B cell (primary cell): ENCODE measurements at regions of chr9 and their contacts with region 1.

Region 1: GRCh38 chr9:105244003-105244733 is at the start of gene SLC44A1:
- DNase-seq: peak; percentile 92
- ATAC-seq: peak; percentile 84
- H3K4me3 ChIP-seq: peak within 1 kb of the TSS; percentile 38 to 85 (median 71)
- H3K4me3 Mint-ChIP-seq: peak within 1 kb of the TSS; percentile 95
- H3K27ac ChIP-seq: peak within 1 kb of the TSS; percentile 42 to 73
- H3K27ac Mint-ChIP-seq: peak within 1 kb of the TSS; percentile 89
- H3K4me1 ChIP-seq: peaks cover 11 to 15% of the 10 kb centered on the region in 2 donors
- H3K4me1 Mint-ChIP-seq: peaks cover 28% of the 10 kb centered on the region
- H3K27me3 ChIP-seq: no peaks in the 10 kb centered on the region
- H3K27me3 Mint-ChIP-seq: peaks cover 8% of the 10 kb centered on the region
- CTCF ChIP-seq: no peak
- total RNA-seq, gene SLC44A1: 16.2 and 17.7 TPM in 2 replicates

Region 2: DNA sequence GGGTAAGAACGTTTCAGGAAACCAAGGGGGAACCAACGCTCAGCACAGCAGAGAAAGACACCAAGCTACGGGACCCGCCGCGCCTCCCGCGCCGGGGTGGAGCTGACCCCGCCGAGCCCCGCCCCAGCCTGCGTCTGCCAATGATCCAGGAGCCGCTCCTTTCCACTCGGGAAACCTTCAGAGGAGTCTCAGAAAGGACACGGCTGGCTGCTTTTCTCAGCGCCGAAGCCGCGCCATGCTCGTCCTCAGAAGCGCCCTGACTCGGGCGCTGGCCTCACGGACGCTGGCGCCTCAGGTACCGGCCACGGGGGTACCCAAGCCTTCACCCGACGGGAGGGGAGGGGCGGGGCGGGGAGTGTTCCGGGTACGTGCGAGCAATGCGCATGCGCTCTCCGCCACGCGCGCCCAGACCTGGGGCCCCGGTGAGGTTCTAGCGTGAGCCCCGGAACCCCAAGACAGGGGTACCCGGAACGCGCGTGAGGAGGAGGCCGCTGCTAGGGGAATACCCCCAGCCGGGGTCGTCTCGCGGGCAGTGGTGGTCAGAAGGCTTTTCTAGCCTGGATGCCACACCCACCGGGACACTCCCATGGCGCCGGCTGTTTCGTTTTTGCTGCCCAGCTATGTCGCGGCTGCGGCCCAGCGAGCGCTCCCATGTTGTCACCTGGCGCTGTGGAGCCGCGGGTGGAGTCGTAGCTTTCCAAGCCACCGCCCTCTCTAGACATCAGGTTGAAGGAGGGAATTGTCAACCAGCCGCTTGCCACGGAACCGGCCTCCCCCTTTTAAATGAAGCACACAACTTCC is 496.4 kb before region 1 on chr9 and contains the start of gene NIPSNAP3A:
- CTCF ChIA-PET with region 1: no interaction called
- POLR2A ChIA-PET with region 1: interaction called, 7 read pairs
- intact Hi-C with region 1: loop called (anchors 5 kb)
- DNase-seq: peak; percentile 95
- ATAC-seq: peak; percentile 85
- H3K4me3 ChIP-seq: peak within 1 kb of the TSS; percentile 76 to 91 (median 84)
- H3K4me3 Mint-ChIP-seq: peak within 1 kb of the TSS; percentile 95
- H3K27ac ChIP-seq: peak within 1 kb of the TSS; percentile 88 to 90
- H3K27ac Mint-ChIP-seq: peak within 1 kb of the TSS; percentile 96
- H3K4me1 ChIP-seq: peaks cover 11 to 15% of the 10 kb centered on the region in 2 donors
- H3K4me1 Mint-ChIP-seq: peaks cover 30% of the 10 kb centered on the region
- H3K27me3 ChIP-seq: no peaks in the 10 kb centered on the region
- H3K27me3 Mint-ChIP-seq: no peaks in the 10 kb centered on the region
- CTCF ChIP-seq: no peak
- total RNA-seq, gene NIPSNAP3A: 20.8 and 23.6 TPM in 2 replicates

Region 3: DNA sequence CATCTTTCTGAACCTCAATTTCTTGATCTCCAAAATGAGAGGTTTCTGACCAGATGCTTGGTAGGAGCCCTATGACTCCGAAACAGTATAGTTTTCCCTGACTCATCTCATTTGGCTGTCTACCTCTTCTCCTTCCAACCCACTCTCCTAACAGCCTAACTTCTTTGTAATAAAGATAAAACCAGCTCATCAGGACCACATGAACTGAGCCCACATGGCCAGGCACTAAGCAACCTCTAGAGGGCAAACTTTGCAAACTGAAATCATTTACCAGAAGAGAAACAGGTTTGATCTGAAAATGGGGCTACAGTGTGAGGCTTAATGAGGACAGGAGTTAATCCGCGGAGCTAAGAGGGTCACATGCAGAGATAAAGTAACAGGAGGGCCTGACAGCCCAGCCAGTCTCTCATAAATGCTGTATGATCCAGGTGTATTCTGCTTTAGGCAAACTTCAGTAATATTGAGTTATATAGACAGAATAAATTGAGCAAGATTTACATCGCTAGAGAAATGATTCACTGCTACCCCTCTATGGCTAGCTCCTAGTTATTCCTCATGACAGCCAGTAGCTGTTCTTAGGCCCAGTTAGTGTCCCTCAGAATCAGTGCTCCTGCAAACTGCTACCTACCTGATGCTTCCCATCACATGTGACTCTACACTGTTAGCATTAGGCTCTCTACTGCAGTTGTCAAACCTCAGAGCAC is 380.8 kb before region 1 on chr9:
- CTCF ChIA-PET with region 1: interaction called, 7 read pairs
- POLR2A ChIA-PET with region 1: no interaction called
- intact Hi-C with region 1: loop called (anchors 5 kb)
- DNase-seq: peak; percentile 71
- ATAC-seq: peak; percentile 72
- H3K4me3 ChIP-seq: no peak overlapping the region
- H3K4me3 Mint-ChIP-seq: no peak overlapping the region
- H3K27ac ChIP-seq: no peak overlapping the region
- H3K27ac Mint-ChIP-seq: peak overlapping the region; percentile 1
- H3K4me1 ChIP-seq: peaks cover 27 to 51% of the 10 kb centered on the region in 2 donors
- H3K4me1 Mint-ChIP-seq: peaks cover 50% of the 10 kb centered on the region
- H3K27me3 ChIP-seq: no peaks in the 10 kb centered on the region
- H3K27me3 Mint-ChIP-seq: no peaks in the 10 kb centered on the region
- CTCF ChIP-seq: peak; percentile 82

Region 4: GRCh38 chr9:105198865-105199264 is 45.3 kb before region 1 on chr9:
- CTCF ChIA-PET with region 1: no interaction called
- POLR2A ChIA-PET with region 1: no interaction called
- intact Hi-C with region 1: no loop called
- DNase-seq: no peak
- ATAC-seq: no peak
- H3K4me3 ChIP-seq: no peak overlapping the region
- H3K4me3 Mint-ChIP-seq: no peak overlapping the region
- H3K27ac ChIP-seq: no peak overlapping the region
- H3K27ac Mint-ChIP-seq: no peak overlapping the region
- H3K4me1 ChIP-seq: no peaks in the 10 kb centered on the region
- H3K4me1 Mint-ChIP-seq: no peaks in the 10 kb centered on the region
- H3K27me3 ChIP-seq: no peaks in the 10 kb centered on the region
- H3K27me3 Mint-ChIP-seq: peaks cover 10% of the 10 kb centered on the region
- CTCF ChIP-seq: no peak

Region 5: GRCh38 chr9:105254226-105254625 is 10.1 kb after region 1 on chr9:
- CTCF ChIA-PET with region 1: interaction called, 10 read pairs
- POLR2A ChIA-PET with region 1: no interaction called
- intact Hi-C with region 1: no loop called
- DNase-seq: no peak
- ATAC-seq: no peak
- H3K4me3 ChIP-seq: no peak overlapping the region
- H3K4me3 Mint-ChIP-seq: no peak overlapping the region
- H3K27ac ChIP-seq: no peak overlapping the region
- H3K27ac Mint-ChIP-seq: no peak overlapping the region
- H3K4me1 ChIP-seq: peaks cover 0 to 11% of the 10 kb centered on the region in 2 donors
- H3K4me1 Mint-ChIP-seq: peaks cover 12% of the 10 kb centered on the region
- H3K27me3 ChIP-seq: no peaks in the 10 kb centered on the region
- H3K27me3 Mint-ChIP-seq: no peaks in the 10 kb centered on the region
- CTCF ChIP-seq: no peak

Region 6: DNA sequence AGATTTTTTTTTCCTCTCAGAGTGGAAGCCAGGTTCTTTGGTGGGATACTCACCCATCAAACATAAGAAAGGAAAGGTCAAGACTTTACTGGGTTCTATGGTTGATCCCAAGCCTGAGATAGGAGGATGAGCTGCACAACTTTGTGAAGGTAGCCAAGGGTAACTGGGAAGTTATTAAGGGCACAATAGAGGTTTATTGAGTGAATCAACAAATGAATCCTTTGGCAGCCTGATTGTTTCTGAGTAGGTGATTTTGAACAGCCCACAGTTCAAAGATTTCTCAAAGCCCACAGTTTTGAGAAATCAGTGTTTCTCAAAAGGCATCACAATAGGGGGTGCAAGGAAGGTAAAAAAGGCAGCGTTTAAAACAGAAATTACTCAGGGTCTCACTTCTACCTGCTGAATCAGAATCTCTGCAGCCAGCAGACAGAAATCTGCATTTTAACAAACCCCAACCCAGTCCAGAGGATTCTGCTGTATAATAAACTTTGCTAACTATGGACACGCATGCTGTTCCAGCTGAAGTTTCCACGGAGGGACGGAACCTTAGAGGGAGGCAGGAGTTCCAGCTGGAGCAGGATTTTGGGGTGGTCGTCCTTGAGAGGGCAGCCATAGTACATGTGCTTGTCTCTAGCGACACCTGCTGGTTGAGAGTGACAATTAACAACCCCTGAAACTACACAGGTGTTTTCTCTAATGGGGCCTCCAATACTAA is 170.9 kb after region 1 on chr9:
- CTCF ChIA-PET with region 1: interaction called, 8 read pairs
- POLR2A ChIA-PET with region 1: no interaction called
- intact Hi-C with region 1: loop called (anchors 10 kb)
- DNase-seq: peak; percentile 77
- ATAC-seq: peak; percentile 81
- H3K4me3 ChIP-seq: no peak overlapping the region
- H3K4me3 Mint-ChIP-seq: no peak overlapping the region
- H3K27ac ChIP-seq: no peak overlapping the region
- H3K27ac Mint-ChIP-seq: no peak overlapping the region
- H3K4me1 ChIP-seq: peaks cover 3 to 4% of the 10 kb centered on the region in 2 donors
- H3K4me1 Mint-ChIP-seq: peaks cover 4% of the 10 kb centered on the region
- H3K27me3 ChIP-seq: no peaks in the 10 kb centered on the region
- H3K27me3 Mint-ChIP-seq: no peaks in the 10 kb centered on the region
- CTCF ChIP-seq: peak; percentile 94